Naive thymus-derived CD4-positive, alpha-beta T cell (primary cell): ENCODE measurements at regions of chr10 and their contacts with region 1.

Region 1: DNA sequence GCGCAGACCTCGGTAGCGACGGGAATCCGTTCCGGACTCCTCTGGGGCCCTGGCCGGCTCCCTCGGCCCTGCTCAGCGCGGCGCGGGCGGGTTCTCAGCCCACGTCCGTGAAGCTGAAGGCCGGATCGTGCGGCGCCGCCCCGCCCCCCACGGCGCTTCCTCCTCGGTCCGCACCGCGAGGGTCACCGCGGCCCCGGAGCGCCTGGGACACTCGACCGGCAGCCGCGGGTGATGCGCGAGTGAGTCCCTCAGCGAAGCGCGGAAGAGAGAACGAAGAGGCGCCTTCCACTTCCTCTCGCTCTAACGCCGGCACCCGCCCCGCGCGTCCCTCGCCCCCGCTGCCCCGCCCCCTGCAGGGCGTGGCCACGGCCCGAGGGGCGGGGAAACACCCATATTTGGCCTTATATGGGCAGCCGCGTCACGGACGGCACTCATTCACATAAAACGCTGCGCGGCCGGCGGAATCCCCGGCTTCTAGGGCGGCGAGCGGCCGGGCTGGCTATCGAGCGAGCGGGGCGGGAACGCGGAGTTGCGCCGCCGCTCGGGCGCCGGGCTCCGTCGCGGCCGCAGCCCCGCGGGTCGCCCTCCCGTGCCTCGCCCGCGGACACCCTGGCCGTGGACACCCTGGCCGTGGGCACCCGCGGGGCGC is at the start of gene DUSP5:
- DNase-seq: peak; percentile 91 to 99 (median 96)
- ATAC-seq: peak; percentile 96
- H3K4me3 ChIP-seq: peak within 1 kb of the TSS; percentile 77
- H3K4me3 Mint-ChIP-seq: peak within 1 kb of the TSS; percentile 89 to 97 (median 92)
- H3K27ac ChIP-seq: peak within 1 kb of the TSS; percentile 71
- H3K27ac Mint-ChIP-seq: peak within 1 kb of the TSS; percentile 83 to 94 (median 91)
- H3K4me1 ChIP-seq: peaks cover 32 to 43% of the 10 kb centered on the region in 2 donors
- H3K4me1 Mint-ChIP-seq: peaks cover 43 to 57% (median 50%) of the 10 kb centered on the region in 7 donors
- H3K27me3 ChIP-seq: no peaks in the 10 kb centered on the region
- H3K27me3 Mint-ChIP-seq: peaks cover 0 to 3% (median 0%) of the 10 kb centered on the region in 5 donors
- total RNA-seq, gene DUSP5: 0.38 to 57.2 (median 35.7) TPM

Region 2: DNA sequence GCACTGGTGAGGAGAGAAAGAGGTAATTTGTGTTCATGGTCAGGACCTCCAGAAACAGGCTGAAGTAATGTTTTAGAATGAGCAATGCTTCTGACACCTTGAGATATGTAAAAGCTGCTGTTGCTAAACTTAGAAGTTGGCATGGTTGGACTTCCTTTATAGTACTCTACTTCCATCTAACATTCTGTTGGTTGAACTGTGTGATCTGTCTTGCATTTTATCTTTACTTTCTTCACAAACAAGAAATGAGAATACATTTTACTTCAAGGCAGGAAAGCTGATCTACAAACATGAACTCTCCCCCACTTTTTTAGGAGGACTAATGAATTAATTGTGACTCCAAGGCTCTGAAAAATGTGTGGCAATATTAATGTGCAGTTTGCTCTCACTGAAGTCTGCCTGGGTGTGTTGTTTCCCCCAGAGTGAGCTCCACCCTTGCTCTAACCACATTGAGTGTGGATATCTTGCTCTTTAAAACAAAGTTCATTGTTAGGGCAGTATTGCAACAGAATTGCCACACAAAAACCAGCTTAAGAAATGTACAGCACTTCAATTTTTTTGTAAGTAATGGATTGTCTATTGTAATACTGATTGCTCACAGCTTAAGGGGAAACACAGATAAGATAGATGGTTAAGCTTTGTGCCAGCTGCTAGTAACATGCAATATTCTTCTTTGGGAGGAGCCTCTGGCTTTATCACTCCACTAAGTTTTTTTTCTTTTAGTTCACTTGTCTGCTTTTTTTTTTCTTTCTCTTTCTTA is 420.8 kb before region 1 on chr10:
- CTCF ChIA-PET with region 1: interaction called, 3 read pairs
- POLR2A ChIA-PET with region 1: interaction called, 3 read pairs
- intact Hi-C with region 1: loop called in 1 of 2 experiments (anchors 5 kb)
- DNase-seq: peak in 7 of 9 donors; percentile 47 to 74 (median 60)
- ATAC-seq: peak; percentile 85
- H3K4me3 ChIP-seq: peak overlapping the region; percentile 21
- H3K4me3 Mint-ChIP-seq: peak overlapping the region; percentile 73 to 92 (median 86)
- H3K27ac ChIP-seq: peak overlapping the region; percentile 56
- H3K27ac Mint-ChIP-seq: peak overlapping the region; percentile 79 to 97 (median 94)
- H3K4me1 ChIP-seq: peaks cover 69 to 84% of the 10 kb centered on the region in 2 donors
- H3K4me1 Mint-ChIP-seq: peaks cover 64 to 97% (median 87%) of the 10 kb centered on the region in 7 donors
- H3K27me3 ChIP-seq: no peaks in the 10 kb centered on the region
- H3K27me3 Mint-ChIP-seq: no peaks in the 10 kb centered on the region

Region 3: GRCh38 chr10:110304780-110305421 is 192.7 kb before region 1 on chr10 and contains the start of gene SMNDC1:
- CTCF ChIA-PET with region 1: interaction called, 6 read pairs
- POLR2A ChIA-PET with region 1: interaction called, 21 read pairs
- intact Hi-C with region 1: loop called in 1 of 2 experiments (anchors 1 kb)
- DNase-seq: peak; percentile 93 to 97 (median 96)
- ATAC-seq: peak; percentile 94
- H3K4me3 ChIP-seq: peak within 1 kb of the TSS; percentile 91
- H3K4me3 Mint-ChIP-seq: peak within 1 kb of the TSS; percentile 94 to 99 (median 98)
- H3K27ac ChIP-seq: peak within 1 kb of the TSS; percentile 89
- H3K27ac Mint-ChIP-seq: peak within 1 kb of the TSS; percentile 97 to 100 (median 100)
- H3K4me1 ChIP-seq: peaks cover 32 to 38% of the 10 kb centered on the region in 2 donors
- H3K4me1 Mint-ChIP-seq: peaks cover 26 to 61% (median 55%) of the 10 kb centered on the region in 7 donors
- H3K27me3 ChIP-seq: no peaks in the 10 kb centered on the region
- H3K27me3 Mint-ChIP-seq: no peaks in the 10 kb centered on the region
- total RNA-seq, gene SMNDC1: 34.4 to 43.1 (median 40.1) TPM

Region 4: DNA sequence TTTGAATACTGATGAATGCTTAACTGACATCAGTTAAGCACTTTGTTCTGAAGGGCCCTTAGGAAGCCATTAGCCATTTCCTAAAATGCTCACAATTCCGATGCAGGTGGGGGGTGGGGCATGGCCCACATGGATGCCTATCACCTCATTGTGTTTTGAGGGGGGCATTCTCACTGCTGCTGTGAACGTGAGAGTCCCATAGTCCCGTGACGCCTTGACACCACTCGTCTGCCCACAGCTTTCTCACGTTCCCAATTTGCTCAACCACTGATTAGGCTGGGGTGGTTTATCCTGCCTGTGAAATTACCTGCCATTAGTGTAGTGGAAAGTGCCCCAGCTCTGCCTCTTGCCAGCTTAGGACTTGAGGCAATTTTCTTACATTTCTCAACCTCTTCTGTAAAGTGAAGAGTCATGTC is 32.0 kb after region 1 on chr10:
- CTCF ChIA-PET with region 1: no interaction called
- POLR2A ChIA-PET with region 1: no interaction called
- intact Hi-C with region 1: loop called in 1 of 2 experiments (anchors 1 kb)
- DNase-seq: no peak
- ATAC-seq: peak; percentile 56
- H3K4me3 ChIP-seq: no peak overlapping the region
- H3K4me3 Mint-ChIP-seq: peak overlapping the region in 6 of 10 donors; percentile 24 to 63 (median 34)
- H3K27ac ChIP-seq: no peak overlapping the region
- H3K27ac Mint-ChIP-seq: peak overlapping the region in 2 of 9 donors; percentile 69 to 79
- H3K4me1 ChIP-seq: peaks cover 9 to 21% of the 10 kb centered on the region in 2 donors
- H3K4me1 Mint-ChIP-seq: peaks cover 11 to 62% (median 22%) of the 10 kb centered on the region in 7 donors
- H3K27me3 ChIP-seq: no peaks in the 10 kb centered on the region
- H3K27me3 Mint-ChIP-seq: peaks cover 0 to 9% (median 0%) of the 10 kb centered on the region in 5 donors

Region 5: DNA sequence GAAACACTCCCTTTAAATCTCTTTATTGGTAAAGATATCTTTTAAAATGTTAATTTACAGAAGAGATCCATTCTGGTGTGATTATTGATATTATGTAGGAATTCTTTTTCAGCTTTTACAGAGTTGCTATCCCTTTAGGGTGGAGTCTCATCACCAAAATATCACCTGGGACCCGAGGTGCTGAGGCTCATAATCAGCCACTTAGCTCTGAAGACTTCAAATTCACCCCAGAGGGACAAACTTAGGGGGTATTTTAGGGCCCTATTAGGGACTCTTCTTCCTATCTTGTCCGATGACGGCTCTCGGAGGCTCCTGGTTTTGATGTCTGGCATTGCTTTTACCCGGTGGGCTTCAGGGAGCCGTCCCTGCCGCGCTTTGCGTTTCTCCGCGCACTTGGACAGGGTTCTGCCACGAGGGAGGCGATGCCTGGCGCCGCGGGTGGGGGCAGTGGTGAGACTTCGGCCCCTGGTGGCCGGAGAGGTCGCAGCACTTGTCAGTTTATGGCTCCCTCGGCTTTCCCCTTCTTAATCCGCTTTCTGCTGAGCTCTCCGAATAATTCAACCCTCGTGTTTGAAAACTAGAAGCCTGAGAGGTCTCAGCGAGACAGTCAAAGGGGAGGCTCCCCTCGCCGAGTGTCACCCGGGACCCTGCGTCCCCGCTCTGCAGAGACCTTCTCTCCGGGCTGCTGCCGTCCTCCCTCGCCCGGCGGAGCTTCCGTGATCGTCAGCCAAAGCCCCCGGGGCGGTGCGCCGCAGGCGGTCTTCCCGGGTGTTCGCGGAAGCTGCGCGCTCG is 174.4 kb after region 1 on chr10:
- CTCF ChIA-PET with region 1: no interaction called
- POLR2A ChIA-PET with region 1: no interaction called
- intact Hi-C with region 1: loop called in 1 of 2 experiments (anchors 1 kb)
- DNase-seq: peak; percentile 31 to 66 (median 59)
- ATAC-seq: peak; percentile 97
- H3K4me3 ChIP-seq: peak overlapping the region; percentile 88
- H3K4me3 Mint-ChIP-seq: peak overlapping the region; percentile 80 to 94 (median 91)
- H3K27ac ChIP-seq: peak overlapping the region; percentile 70
- H3K27ac Mint-ChIP-seq: peak overlapping the region in 8 of 9 donors; percentile 34 to 90 (median 82)
- H3K4me1 ChIP-seq: peaks cover 0 to 3% of the 10 kb centered on the region in 2 donors
- H3K4me1 Mint-ChIP-seq: peaks cover 0 to 12% (median 4%) of the 10 kb centered on the region in 7 donors
- H3K27me3 ChIP-seq: no peaks in the 10 kb centered on the region
- H3K27me3 Mint-ChIP-seq: peaks cover 0 to 77% (median 0%) of the 10 kb centered on the region in 5 donors

Region 6: DNA sequence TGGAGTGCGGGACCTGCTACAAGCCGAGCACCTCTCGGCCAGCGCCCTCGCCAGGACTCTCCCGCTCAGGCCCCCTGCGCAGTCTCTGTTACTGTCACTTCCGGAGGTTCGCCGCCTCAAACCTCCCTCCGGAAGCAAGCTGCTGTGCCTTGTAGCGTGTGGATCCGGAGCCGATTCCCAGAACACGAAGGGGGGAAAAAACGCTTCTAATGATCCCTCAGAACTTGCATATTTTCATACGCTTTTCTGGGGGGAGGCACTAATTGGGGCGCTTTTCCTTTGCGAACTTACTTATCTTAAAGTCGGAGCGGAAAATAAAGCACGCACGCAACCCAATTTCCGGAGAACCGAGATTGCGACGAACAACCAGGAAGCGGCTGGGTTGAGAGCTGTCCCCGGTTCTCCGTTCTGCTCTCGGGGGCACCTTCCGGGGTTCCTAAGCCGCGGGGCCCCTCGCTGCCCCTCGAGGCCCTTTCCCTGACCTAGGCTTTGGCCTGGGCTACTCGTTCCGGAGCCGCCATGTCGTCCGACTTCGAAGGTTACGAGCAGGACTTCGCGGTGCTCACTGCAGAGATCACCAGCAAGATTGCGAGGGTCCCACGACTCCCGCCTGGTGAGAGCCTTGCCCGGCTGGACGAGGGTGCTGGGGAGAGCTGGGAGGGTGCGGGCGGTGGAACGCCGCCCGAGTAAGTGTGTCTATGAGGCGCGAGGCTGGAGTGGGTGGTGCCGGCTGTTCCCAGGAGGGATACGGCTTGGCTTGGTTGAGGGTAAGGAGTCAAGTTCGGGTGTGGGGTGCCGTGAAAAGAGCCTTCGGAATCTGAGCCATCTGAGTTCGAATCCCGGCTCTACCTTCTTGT is 1949.5 kb after region 1 on chr10 and contains the starts of genes VTI1A and ZDHHC6:
- CTCF ChIA-PET with region 1: no interaction called
- POLR2A ChIA-PET with region 1: no interaction called
- intact Hi-C with region 1: loop called (anchors 5 kb)
- DNase-seq: peak; percentile 70 to 89 (median 84)
- ATAC-seq: peak; percentile 95
- H3K4me3 ChIP-seq: peak within 1 kb of the TSS; percentile 85
- H3K4me3 Mint-ChIP-seq: peak within 1 kb of the TSS; percentile 92 to 100 (median 96)
- H3K27ac ChIP-seq: peak within 1 kb of the TSS; percentile 90
- H3K27ac Mint-ChIP-seq: peak within 1 kb of the TSS; percentile 95 to 100 (median 99)
- H3K4me1 ChIP-seq: peaks cover 23 to 25% of the 10 kb centered on the region in 2 donors
- H3K4me1 Mint-ChIP-seq: peaks cover 31 to 81% (median 65%) of the 10 kb centered on the region in 7 donors
- H3K27me3 ChIP-seq: no peaks in the 10 kb centered on the region
- H3K27me3 Mint-ChIP-seq: no peaks in the 10 kb centered on the region
- total RNA-seq, gene VTI1A: 40.2 to 56.8 (median 51.4) TPM
- total RNA-seq, gene ZDHHC6: 34.3 to 66.3 (median 50.9) TPM